Panc1 (cell line): ENCODE measurements at regions of chr17 and their contacts with region 1.

Region 1: DNA sequence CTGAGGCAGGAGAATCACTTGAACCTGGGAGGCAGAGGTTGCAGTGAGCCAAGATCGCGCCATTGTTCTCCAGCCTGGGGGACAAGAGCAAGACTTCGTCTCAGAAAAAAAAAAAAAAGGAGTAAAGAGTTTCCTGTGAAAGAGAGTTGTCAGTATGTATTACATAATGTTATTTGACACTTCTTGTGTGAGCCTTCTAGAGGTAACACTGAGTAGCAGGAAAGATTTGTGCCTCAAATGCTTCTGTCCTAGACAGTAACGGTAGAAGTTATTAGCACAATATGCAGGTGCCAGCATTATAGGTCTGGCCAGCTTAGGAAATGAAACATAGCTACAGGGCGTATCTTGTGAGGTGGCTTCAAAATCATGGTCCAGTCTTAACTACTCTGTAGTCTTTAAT is 6.2 kb downstream of the RPS6KB1 start:
- DNase-seq: no peak
- ATAC-seq: no peak
- H3K4me3 ChIP-seq: no peak overlapping the region
- H3K27ac ChIP-seq: no peak overlapping the region
- H3K4me1 ChIP-seq: peaks cover 5% of the 10 kb centered on the region
- H3K27me3 ChIP-seq: no peaks in the 10 kb centered on the region
- CTCF ChIP-seq: no peak

Region 2: GRCh38 chr17:59791603-59792457 is 107.3 kb before region 1 on chr17:
- CTCF ChIA-PET with region 1: no interaction called
- POLR2A ChIA-PET with region 1: no interaction called
- in situ Hi-C with region 1: no loop called
- intact Hi-C with region 1: no loop called
- DNase-seq: no peak
- ATAC-seq: no peak
- H3K4me3 ChIP-seq: no peak overlapping the region
- H3K27ac ChIP-seq: peak overlapping the region; percentile 100
- H3K4me1 ChIP-seq: peaks cover 22% of the 10 kb centered on the region
- H3K27me3 ChIP-seq: no peaks in the 10 kb centered on the region
- CTCF ChIP-seq: no peak

Region 3: DNA sequence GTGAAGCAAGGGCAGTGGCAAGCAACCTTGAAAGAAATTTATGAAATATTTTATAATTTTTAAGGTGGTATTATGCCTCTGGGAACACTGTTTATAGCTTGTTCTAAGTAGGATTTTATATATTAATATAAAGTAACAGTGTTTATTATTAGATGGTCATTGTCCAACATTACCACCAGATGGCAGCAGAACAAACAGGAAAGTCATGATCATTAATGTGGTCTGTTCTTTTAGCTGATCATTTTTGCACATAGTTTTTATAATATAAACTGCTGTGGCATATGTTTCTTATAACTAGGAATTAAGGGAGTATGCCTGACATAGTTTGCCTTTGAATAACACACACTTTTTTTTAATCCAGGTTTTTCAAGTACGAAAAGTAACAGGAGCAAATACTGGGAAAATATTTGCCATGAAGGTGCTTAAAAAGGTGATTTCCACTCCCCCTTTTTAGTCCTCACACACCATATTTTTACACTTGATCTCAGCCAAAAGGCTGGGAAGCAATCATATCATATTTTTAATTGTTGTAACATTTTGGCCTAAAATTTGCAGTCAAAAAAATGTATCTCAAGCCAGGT is 15.3 kb after region 1 on chr17:
- CTCF ChIA-PET with region 1: interaction called, 10 read pairs
- POLR2A ChIA-PET with region 1: no interaction called
- in situ Hi-C with region 1: no loop called
- intact Hi-C with region 1: no loop called
- DNase-seq: no peak
- ATAC-seq: no peak
- H3K4me3 ChIP-seq: no peak overlapping the region
- H3K27ac ChIP-seq: no peak overlapping the region
- H3K4me1 ChIP-seq: 0 out of 2 replicates have a peak, but pooled peaks cover 3% of the 10 kb centered on the region
- H3K27me3 ChIP-seq: no peaks in the 10 kb centered on the region
- CTCF ChIP-seq: no peak; the same call in 1 of the 2 replicates

Region 4: DNA sequence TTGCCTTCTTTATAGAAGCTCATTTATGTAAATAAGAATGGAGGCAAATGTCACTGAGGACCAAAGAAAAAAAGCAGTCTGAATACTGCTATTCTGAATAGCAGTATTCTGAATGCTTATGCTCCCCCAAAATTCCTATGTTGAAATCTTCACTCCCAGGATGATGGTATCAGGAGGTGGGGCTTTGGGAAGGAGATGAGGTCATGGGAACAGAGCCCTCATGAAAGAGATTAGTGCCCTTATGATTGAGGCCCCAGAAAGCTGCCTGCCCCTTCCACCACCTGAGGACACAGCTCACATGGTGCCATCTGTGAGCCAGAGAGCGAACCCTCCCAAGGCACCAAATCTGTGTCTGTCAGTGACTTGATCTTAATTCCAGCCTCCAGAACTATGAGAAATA is 150.8 kb after region 1 on chr17:
- CTCF ChIA-PET with region 1: no interaction called
- POLR2A ChIA-PET with region 1: no interaction called
- in situ Hi-C with region 1: no loop called
- intact Hi-C with region 1: no loop called
- DNase-seq: no peak
- ATAC-seq: no peak
- H3K4me3 ChIP-seq: no peak overlapping the region
- H3K27ac ChIP-seq: no peak overlapping the region
- H3K4me1 ChIP-seq: no peaks in the 10 kb centered on the region
- H3K27me3 ChIP-seq: no peaks in the 10 kb centered on the region
- CTCF ChIP-seq: no peak